ENCODE measurements at regions of chr18 and their contacts with region 1.

Region 1: GRCh38 chr18:10560450-10561045 is 34.7 kb downstream of the NAPG start:
- DNase-seq: peak; percentile 72
- ATAC-seq: peak; percentile 81
- H3K4me3 ChIP-seq: no peak overlapping the region
- H3K27ac ChIP-seq: no peak overlapping the region
- H3K4me1 ChIP-seq: peaks cover 11% of the 10 kb centered on the region; the same call in 1 of the 2 replicates
- H3K27me3 ChIP-seq: no peaks in the 10 kb centered on the region
- CTCF ChIP-seq: peak; percentile 75
- POLR2A ChIP-seq: no peak
- RAD21 ChIP-seq: peak; percentile 74

Region 2: GRCh38 chr18:9594823-9595596 is 965.5 kb before region 1 on chr18:
- CTCF ChIA-PET with region 1: no interaction called
- POLR2A ChIA-PET with region 1: no interaction called
- dilution Hi-C with region 1: no loop called
- in situ Hi-C with region 1: no loop called
- intact Hi-C with region 1: no loop called
- DNase-seq: peak; percentile 58
- ATAC-seq: peak; percentile 85
- H3K4me3 ChIP-seq: peak overlapping the region; percentile 32; the same call in 1 of the 2 replicates
- H3K27ac ChIP-seq: peak overlapping the region; percentile 33; the same call in 1 of the 2 replicates
- H3K4me1 ChIP-seq: peaks cover 7% of the 10 kb centered on the region
- H3K27me3 ChIP-seq: no peaks in the 10 kb centered on the region
- CTCF ChIP-seq: no peak
- POLR2A ChIP-seq: no peak
- RAD21 ChIP-seq: no peak

Region 3: GRCh38 chr18:10750191-10751035 is 189.9 kb after region 1 on chr18:
- CTCF ChIA-PET with region 1: no interaction called
- POLR2A ChIA-PET with region 1: no interaction called
- dilution Hi-C with region 1: no loop called
- in situ Hi-C with region 1: no loop called
- intact Hi-C with region 1: loop called (anchors 5 kb)
- DNase-seq: peak; percentile 6
- ATAC-seq: no peak
- H3K4me3 ChIP-seq: no peak overlapping the region
- H3K27ac ChIP-seq: no peak overlapping the region
- H3K4me1 ChIP-seq: no peaks in the 10 kb centered on the region; the same call in 1 of the 2 replicates
- H3K27me3 ChIP-seq: no peaks in the 10 kb centered on the region
- CTCF ChIP-seq: no peak
- POLR2A ChIP-seq: no peak
- RAD21 ChIP-seq: no peak

Region 4: GRCh38 chr18:10838553-10838952 is 278.0 kb after region 1 on chr18:
- CTCF ChIA-PET with region 1: no interaction called
- POLR2A ChIA-PET with region 1: no interaction called
- dilution Hi-C with region 1: no loop called
- in situ Hi-C with region 1: no loop called
- intact Hi-C with region 1: loop called (anchors 5 kb)
- DNase-seq: peak; percentile 87
- ATAC-seq: peak; percentile 48
- H3K4me3 ChIP-seq: no peak overlapping the region
- H3K27ac ChIP-seq: no peak overlapping the region
- H3K4me1 ChIP-seq: peaks cover 7% of the 10 kb centered on the region
- H3K27me3 ChIP-seq: no peaks in the 10 kb centered on the region
- CTCF ChIP-seq: no peak
- POLR2A ChIP-seq: no peak
- RAD21 ChIP-seq: no peak

Region 5: GRCh38 chr18:11149441-11150270 is 589.1 kb after region 1 on chr18 and contains the start of gene PIEZO2:
- CTCF ChIA-PET with region 1: interaction called, 4 read pairs
- POLR2A ChIA-PET with region 1: no interaction called
- dilution Hi-C with region 1: no loop called
- in situ Hi-C with region 1: loop called (anchors 5 kb)
- intact Hi-C with region 1: loop called (anchors 1 kb)
- DNase-seq: peak; percentile 65
- ATAC-seq: peak; percentile 98
- H3K4me3 ChIP-seq: peak within 1 kb of the TSS; percentile 69
- H3K27ac ChIP-seq: peak within 1 kb of the TSS; percentile 36; the same call in 1 of the 2 replicates
- H3K4me1 ChIP-seq: peaks cover 5% of the 10 kb centered on the region; the same call in 1 of the 2 replicates
- H3K27me3 ChIP-seq: peaks cover 12% of the 10 kb centered on the region
- CTCF ChIP-seq: no peak
- POLR2A ChIP-seq: no peak
- RAD21 ChIP-seq: no peak
- total RNA-seq, gene PIEZO2: 3.3 and 4.1 TPM in 2 replicates